ENCODE measurements at regions of chr5 and their contacts with region 1.

Region 1: DNA sequence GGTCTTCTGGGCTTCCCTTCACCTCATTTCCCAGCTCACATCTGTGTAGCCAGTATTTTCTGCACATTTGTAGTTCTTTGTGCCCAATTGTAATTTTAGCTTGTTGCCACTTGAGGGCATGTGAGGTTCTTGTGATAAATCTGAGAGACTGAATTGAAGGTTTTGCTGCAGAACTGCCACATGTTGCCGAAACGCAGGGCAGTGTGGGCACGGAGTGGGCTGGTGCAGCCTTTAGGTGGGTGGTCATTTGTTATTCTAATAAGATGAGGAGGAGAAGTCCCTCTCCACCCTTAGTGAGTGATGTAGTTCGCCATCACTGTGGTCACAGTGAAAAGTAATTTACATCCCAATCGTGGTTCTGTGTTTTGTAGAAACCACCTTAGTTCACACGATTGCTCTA is 21.2 kb downstream of the OTULIN start:
- DNase-seq: no peak
- ATAC-seq: peak; percentile 58 to 86 (median 68)
- H3K4me3 ChIP-seq: no peak overlapping the region
- H3K27ac ChIP-seq: no peak overlapping the region
- H3K4me1 ChIP-seq: peaks cover 29% of the 10 kb centered on the region
- H3K27me3 ChIP-seq: no peaks in the 10 kb centered on the region
- CTCF ChIP-seq: peak; percentile 68

Region 2: GRCh38 chr5:14775857-14776256 is 90.1 kb after region 1 on chr5:
- intact Hi-C with region 1: loop called in 1 of 2 experiments (anchors 10 kb)
- DNase-seq: peak in 1 of 2 donors; percentile 40
- ATAC-seq: peak in 1 of 4 donors; percentile 15
- H3K4me3 ChIP-seq: no peak overlapping the region
- H3K27ac ChIP-seq: no peak overlapping the region
- H3K4me1 ChIP-seq: peaks cover 17% of the 10 kb centered on the region
- H3K27me3 ChIP-seq: no peaks in the 10 kb centered on the region
- CTCF ChIP-seq: no peak

Region 3: GRCh38 chr5:15003511-15003920 is 317.8 kb after region 1 on chr5:
- intact Hi-C with region 1: loop called (anchors 2 kb)
- DNase-seq: peak; percentile 26 to 60
- ATAC-seq: peak; percentile 87 to 97 (median 94)
- H3K4me3 ChIP-seq: no peak overlapping the region
- H3K27ac ChIP-seq: no peak overlapping the region
- H3K4me1 ChIP-seq: no peaks in the 10 kb centered on the region
- H3K27me3 ChIP-seq: no peaks in the 10 kb centered on the region
- CTCF ChIP-seq: peak; percentile 88

Region 4: GRCh38 chr5:15013654-15014463 is 328.1 kb after region 1 on chr5:
- intact Hi-C with region 1: loop called in 1 of 2 experiments (anchors 2 kb)
- DNase-seq: no peak
- ATAC-seq: peak; percentile 74 to 86 (median 80)
- H3K4me3 ChIP-seq: no peak overlapping the region
- H3K27ac ChIP-seq: no peak overlapping the region
- H3K4me1 ChIP-seq: peaks cover 8% of the 10 kb centered on the region
- H3K27me3 ChIP-seq: no peaks in the 10 kb centered on the region
- CTCF ChIP-seq: peak; percentile 77